ENCODE measurements at regions of chr13 and their contacts with region 1.

Region 1: DNA sequence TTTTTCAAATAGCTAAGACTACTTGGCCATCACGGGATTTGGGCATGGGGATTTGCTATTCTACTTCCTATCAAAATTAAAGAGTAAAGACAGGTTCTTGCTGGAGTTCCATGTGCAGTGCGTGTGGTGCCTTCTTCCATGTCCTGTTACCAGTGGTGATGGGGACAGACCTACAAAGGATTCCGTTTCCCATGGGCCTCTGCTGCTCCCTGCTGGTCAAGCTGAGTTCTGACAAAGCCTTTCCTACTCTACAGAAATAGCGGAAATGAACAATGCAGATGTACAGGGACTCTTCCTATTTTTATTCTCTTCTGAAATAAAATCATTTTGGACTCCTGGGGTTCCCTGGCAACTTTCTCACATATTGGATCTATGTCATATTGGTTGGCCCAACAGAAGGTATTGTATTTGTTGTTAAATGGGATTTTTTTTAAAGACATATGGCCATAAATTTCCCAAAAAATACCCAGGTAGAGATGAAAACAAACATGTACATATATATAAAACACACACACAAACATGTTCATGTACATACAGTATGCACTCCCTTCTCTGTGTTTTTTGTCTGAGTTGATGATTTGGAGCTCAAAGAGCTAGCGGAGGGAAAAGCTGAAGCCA is 90.5 kb upstream of the SLC15A1 start:
- DNase-seq: peak; percentile 81 to 85
- H3K4me3 ChIP-seq: no peak overlapping the region
- H3K4me3 Mint-ChIP-seq: no peak overlapping the region
- H3K27ac Mint-ChIP-seq: no peak overlapping the region
- H3K4me1 ChIP-seq: peaks cover 6% of the 10 kb centered on the region; the same call in 1 of the 2 replicates
- H3K4me1 Mint-ChIP-seq: peaks cover 19% of the 10 kb centered on the region
- H3K27me3 ChIP-seq: no peaks in the 10 kb centered on the region
- H3K27me3 Mint-ChIP-seq: no peaks in the 10 kb centered on the region
- CTCF ChIP-seq: peak; percentile 89 to 94

Region 2: DNA sequence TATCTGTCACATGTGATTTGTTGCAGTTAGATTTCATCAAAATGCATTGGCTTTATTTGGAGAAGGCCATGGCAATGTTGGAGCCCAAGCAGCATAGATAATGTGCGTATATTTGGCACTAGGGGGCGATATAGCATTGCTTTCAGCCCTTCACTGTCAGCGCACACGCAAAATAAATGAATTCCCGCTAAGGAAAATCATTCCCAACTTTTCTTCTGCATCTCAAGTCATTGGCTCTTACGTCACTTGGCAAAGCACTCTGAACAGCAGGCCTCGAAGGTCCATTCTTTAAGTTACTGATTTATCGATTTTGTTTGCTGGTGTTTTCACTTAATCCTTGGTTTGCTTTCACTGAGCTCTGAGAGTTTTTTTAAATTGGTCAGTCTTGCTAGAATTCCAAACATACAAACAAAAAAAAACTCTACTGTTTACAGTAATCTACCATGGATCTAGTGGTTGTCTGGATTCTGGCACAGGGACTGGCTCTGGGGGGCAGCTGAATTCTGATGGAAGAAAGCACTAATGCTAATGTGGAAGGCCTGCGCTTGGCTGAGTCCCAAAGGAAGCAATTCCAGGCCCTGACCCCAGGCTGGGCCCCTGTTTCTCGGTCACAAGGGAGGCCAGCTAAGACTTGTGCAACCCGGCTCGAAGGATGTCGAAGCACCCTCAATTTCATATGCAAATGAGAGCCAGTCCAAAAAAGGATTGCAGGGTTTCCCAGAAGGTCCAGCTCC is 987.2 kb before region 1 on chr13:
- CTCF ChIA-PET with region 1: no interaction called
- POLR2A ChIA-PET with region 1: no interaction called
- intact Hi-C with region 1: loop called (anchors 5 kb)
- DNase-seq: peak; percentile 50 to 66
- H3K4me3 ChIP-seq: no peak overlapping the region
- H3K4me3 Mint-ChIP-seq: no peak overlapping the region
- H3K27ac Mint-ChIP-seq: no peak overlapping the region
- H3K4me1 ChIP-seq: 0 out of 2 replicates have a peak, but pooled peaks cover 3% of the 10 kb centered on the region
- H3K4me1 Mint-ChIP-seq: no peaks in the 10 kb centered on the region
- H3K27me3 ChIP-seq: no peaks in the 10 kb centered on the region
- H3K27me3 Mint-ChIP-seq: peaks cover 3% of the 10 kb centered on the region
- CTCF ChIP-seq: peak; percentile 81 to 88

Region 3: DNA sequence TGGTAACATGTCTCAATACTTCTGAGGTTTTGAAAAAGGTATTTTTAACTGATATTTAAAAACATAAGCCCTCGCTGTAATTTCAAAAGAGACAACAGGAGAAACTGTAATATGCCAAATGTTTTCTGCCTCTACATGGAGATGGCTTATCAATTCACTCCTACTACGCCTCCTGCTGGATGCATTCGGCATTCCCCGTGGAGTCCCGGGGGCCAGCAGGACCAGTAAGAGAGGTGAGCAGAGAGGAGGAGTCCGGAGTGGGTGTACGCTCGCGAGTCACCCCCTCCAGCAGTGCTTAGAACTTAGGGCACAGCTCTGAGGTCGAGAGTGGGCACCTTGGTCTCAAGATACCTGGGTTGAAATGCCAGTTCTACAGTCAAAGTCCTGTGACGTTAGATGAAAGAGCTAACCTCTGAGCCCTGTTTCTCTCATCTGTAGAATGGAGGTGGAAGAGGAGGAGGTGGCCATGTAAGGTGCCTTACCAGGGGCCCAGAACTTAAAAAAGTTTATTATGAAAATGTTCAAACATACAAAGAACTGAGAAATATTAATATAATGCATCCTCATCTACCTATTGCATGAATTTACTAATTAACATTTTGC is 376.2 kb before region 1 on chr13:
- CTCF ChIA-PET with region 1: no interaction called
- POLR2A ChIA-PET with region 1: no interaction called
- intact Hi-C with region 1: loop called (anchors 5 kb)
- DNase-seq: peak in 1 of 2 experiments; percentile 69
- H3K4me3 ChIP-seq: no peak overlapping the region
- H3K4me3 Mint-ChIP-seq: no peak overlapping the region
- H3K27ac Mint-ChIP-seq: no peak overlapping the region
- H3K4me1 ChIP-seq: no peaks in the 10 kb centered on the region
- H3K4me1 Mint-ChIP-seq: peaks cover 19% of the 10 kb centered on the region
- H3K27me3 ChIP-seq: no peaks in the 10 kb centered on the region
- H3K27me3 Mint-ChIP-seq: no peaks in the 10 kb centered on the region
- CTCF ChIP-seq: peak; percentile 58 to 67

Region 4: GRCh38 chr13:98672944-98673545 is 169.9 kb before region 1 on chr13:
- CTCF ChIA-PET with region 1: interaction called, 5 read pairs
- POLR2A ChIA-PET with region 1: no interaction called
- intact Hi-C with region 1: loop called (anchors 1 kb)
- DNase-seq: peak; percentile 87 to 91
- H3K4me3 ChIP-seq: no peak overlapping the region
- H3K4me3 Mint-ChIP-seq: peak overlapping the region; percentile 14
- H3K27ac Mint-ChIP-seq: peak overlapping the region; percentile 23
- H3K4me1 ChIP-seq: peaks cover 17% of the 10 kb centered on the region
- H3K4me1 Mint-ChIP-seq: peaks cover 8% of the 10 kb centered on the region
- H3K27me3 ChIP-seq: no peaks in the 10 kb centered on the region
- H3K27me3 Mint-ChIP-seq: no peaks in the 10 kb centered on the region
- CTCF ChIP-seq: peak; percentile 88

Region 5: GRCh38 chr13:98821372-98822224 is 21.4 kb before region 1 on chr13:
- CTCF ChIA-PET with region 1: interaction called, 5 read pairs
- POLR2A ChIA-PET with region 1: no interaction called
- intact Hi-C with region 1: loop called (anchors 2 kb)
- DNase-seq: peak; percentile 54 to 59
- H3K4me3 ChIP-seq: no peak overlapping the region
- H3K4me3 Mint-ChIP-seq: peak overlapping the region; percentile 32
- H3K27ac Mint-ChIP-seq: peak overlapping the region; percentile 10
- H3K4me1 ChIP-seq: peaks cover 31% of the 10 kb centered on the region
- H3K4me1 Mint-ChIP-seq: peaks cover 17% of the 10 kb centered on the region
- H3K27me3 ChIP-seq: no peaks in the 10 kb centered on the region
- H3K27me3 Mint-ChIP-seq: no peaks in the 10 kb centered on the region
- CTCF ChIP-seq: no peak

Region 6: DNA sequence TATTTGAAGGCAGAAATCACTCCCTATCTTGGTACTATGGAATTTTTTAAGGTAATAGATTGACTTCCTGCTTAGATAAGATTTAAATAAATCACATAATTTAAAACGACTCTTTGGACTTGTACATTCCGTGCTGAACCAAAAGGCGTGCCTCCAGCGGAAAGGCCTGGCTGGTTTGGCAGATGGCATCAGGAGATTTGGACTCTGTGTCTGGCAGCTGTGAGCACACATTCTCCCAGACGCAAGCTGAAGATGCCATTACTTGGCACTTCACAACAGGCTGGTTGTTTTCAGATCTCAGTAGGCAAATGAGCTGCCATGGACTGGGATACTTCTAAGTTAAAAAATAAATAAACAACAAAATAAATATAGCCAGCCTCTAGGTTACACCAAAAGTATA is 14.0 kb after region 1 on chr13:
- CTCF ChIA-PET with region 1: no interaction called
- POLR2A ChIA-PET with region 1: no interaction called
- intact Hi-C with region 1: no loop called
- DNase-seq: no peak
- H3K4me3 ChIP-seq: no peak overlapping the region
- H3K4me3 Mint-ChIP-seq: no peak overlapping the region
- H3K27ac Mint-ChIP-seq: no peak overlapping the region
- H3K4me1 ChIP-seq: no peaks in the 10 kb centered on the region
- H3K4me1 Mint-ChIP-seq: no peaks in the 10 kb centered on the region
- H3K27me3 ChIP-seq: no peaks in the 10 kb centered on the region
- H3K27me3 Mint-ChIP-seq: no peaks in the 10 kb centered on the region
- CTCF ChIP-seq: no peak